CD4-positive, alpha-beta memory T cell (primary cell): ENCODE measurements at regions of chr4 and their contacts with region 1.

Region 1: DNA sequence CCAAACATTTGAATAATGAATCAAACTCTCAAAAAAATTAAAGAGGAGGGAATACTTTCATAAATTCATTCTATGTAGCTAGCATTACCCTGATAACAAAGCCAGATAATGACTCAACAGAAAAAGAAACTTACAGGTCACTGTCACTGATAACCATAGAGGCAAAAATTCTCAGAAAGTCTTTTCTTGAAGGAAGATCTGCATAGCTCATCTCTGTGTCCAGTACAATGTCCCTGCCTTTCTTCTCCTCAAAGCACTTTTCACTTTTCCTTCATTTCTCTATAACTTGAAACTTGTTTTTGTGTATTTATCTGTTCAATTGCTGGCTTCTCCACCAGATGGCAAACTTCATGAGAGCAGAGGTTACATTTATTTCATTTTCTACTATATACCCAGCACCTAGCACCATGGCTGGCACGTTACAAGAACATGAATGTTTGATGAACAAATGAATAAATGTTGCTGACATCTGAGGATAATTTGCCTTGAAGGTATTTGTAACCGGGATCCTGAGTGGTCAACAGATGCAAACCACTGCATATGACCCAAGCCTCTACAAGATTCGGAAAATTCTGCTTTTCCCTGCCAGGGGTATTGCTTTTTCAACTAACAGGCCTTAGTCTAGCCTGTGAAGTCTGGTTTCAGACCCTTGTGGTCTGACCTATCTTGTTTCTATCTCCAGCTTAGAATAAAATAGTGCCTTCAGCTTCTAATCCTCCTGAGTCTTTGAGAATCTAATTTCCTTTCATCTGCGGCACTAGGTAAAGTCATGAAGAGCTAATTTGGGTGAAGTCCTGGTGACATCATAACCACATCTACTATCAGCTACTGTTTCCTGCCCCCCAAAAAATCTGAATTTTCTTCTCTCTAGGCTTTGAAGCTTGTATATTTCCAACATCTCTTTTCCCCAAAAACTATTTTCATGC is 52.5 kb upstream of the ANTXR2 start:
- DNase-seq: peak; percentile 60 to 71 (median 68)
- H3K4me3 ChIP-seq: no peak overlapping the region
- H3K4me3 Mint-ChIP-seq: peak overlapping the region in 7 of 8 donors; percentile 41 to 72 (median 50)
- H3K27ac ChIP-seq: peak overlapping the region; percentile 77
- H3K27ac Mint-ChIP-seq: peak overlapping the region; percentile 86 to 97 (median 91)
- H3K4me1 ChIP-seq: peaks cover 56% of the 10 kb centered on the region
- H3K4me1 Mint-ChIP-seq: peaks cover 43 to 63% (median 51%) of the 10 kb centered on the region in 4 donors
- H3K27me3 ChIP-seq: no peaks in the 10 kb centered on the region
- H3K27me3 Mint-ChIP-seq: no peaks in the 10 kb centered on the region

Region 2: GRCh38 chr4:78938868-78939666 is 1186.4 kb before region 1 on chr4 and contains the start of gene PAQR3:
- CTCF ChIA-PET with region 1: no interaction called
- POLR2A ChIA-PET with region 1: no interaction called
- intact Hi-C with region 1: loop called (anchors 10 kb)
- DNase-seq: peak; percentile 75 to 86 (median 84)
- H3K4me3 ChIP-seq: peak within 1 kb of the TSS; percentile 74 to 75
- H3K4me3 Mint-ChIP-seq: peak within 1 kb of the TSS; percentile 95 to 100 (median 98)
- H3K27ac ChIP-seq: peak within 1 kb of the TSS; percentile 75
- H3K27ac Mint-ChIP-seq: peak within 1 kb of the TSS; percentile 90 to 99 (median 97)
- H3K4me1 ChIP-seq: peaks cover 36% of the 10 kb centered on the region
- H3K4me1 Mint-ChIP-seq: peaks cover 25 to 46% (median 35%) of the 10 kb centered on the region in 4 donors
- H3K27me3 ChIP-seq: no peaks in the 10 kb centered on the region
- H3K27me3 Mint-ChIP-seq: peaks cover 10 to 13% of the 10 kb centered on the region in 2 donors
- total RNA-seq, gene PAQR3: 10.2 to 12.1 TPM

Region 3: GRCh38 chr4:80058740-80059139 is 66.8 kb before region 1 on chr4:
- CTCF ChIA-PET with region 1: interaction called, 7 read pairs
- POLR2A ChIA-PET with region 1: interaction called, 3 read pairs
- intact Hi-C with region 1: loop called (anchors 5 kb)
- DNase-seq: peak; percentile 75 to 90 (median 86)
- H3K4me3 ChIP-seq: peak overlapping the region in 1 of 2 donors; percentile 13
- H3K4me3 Mint-ChIP-seq: peak overlapping the region; percentile 74 to 95 (median 84)
- H3K27ac ChIP-seq: peak overlapping the region; percentile 85
- H3K27ac Mint-ChIP-seq: peak overlapping the region; percentile 97 to 100 (median 99)
- H3K4me1 ChIP-seq: peaks cover 65% of the 10 kb centered on the region
- H3K4me1 Mint-ChIP-seq: peaks cover 37 to 79% (median 54%) of the 10 kb centered on the region in 4 donors
- H3K27me3 ChIP-seq: no peaks in the 10 kb centered on the region
- H3K27me3 Mint-ChIP-seq: no peaks in the 10 kb centered on the region

Region 4: GRCh38 chr4:80138551-80139538 is 13.3 kb after region 1 on chr4:
- CTCF ChIA-PET with region 1: interaction called, 73 read pairs
- POLR2A ChIA-PET with region 1: interaction called, 26 read pairs
- intact Hi-C with region 1: loop called (anchors 1 kb)
- DNase-seq: peak; percentile 55 to 81 (median 66)
- H3K4me3 ChIP-seq: no peak overlapping the region
- H3K4me3 Mint-ChIP-seq: peak overlapping the region in 7 of 8 donors; percentile 9 to 68 (median 59)
- H3K27ac ChIP-seq: peak overlapping the region; percentile 45
- H3K27ac Mint-ChIP-seq: peak overlapping the region; percentile 84 to 94 (median 93)
- H3K4me1 ChIP-seq: peaks cover 58% of the 10 kb centered on the region
- H3K4me1 Mint-ChIP-seq: peaks cover 33 to 67% (median 43%) of the 10 kb centered on the region in 4 donors
- H3K27me3 ChIP-seq: no peaks in the 10 kb centered on the region
- H3K27me3 Mint-ChIP-seq: no peaks in the 10 kb centered on the region

Region 5: DNA sequence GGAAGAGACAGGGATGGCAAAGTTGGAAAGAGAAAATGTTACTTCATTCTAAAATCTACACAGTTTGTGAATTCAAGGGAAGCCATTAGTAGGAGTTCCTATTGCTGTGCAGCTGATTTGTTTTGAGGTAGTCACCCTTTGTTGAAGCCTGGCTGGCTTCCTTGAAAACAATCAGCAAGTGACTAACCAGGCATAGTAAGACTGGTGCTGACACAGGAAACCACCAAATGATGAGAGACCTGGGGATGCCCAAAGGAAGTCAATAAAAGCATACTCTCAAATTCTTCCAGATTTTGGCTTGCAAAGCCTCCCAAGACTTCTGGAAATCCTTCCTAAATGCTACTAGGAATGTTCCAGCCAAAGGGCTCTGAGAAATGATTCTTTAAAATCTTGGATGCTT is 47.9 kb after region 1 on chr4:
- CTCF ChIA-PET with region 1: interaction called, 291 read pairs
- POLR2A ChIA-PET with region 1: interaction called, 91 read pairs
- intact Hi-C with region 1: loop called (anchors 1 kb)
- DNase-seq: peak; percentile 63 to 85 (median 72)
- H3K4me3 ChIP-seq: no peak overlapping the region
- H3K4me3 Mint-ChIP-seq: peak overlapping the region; percentile 43 to 82 (median 76)
- H3K27ac ChIP-seq: peak overlapping the region; percentile 71
- H3K27ac Mint-ChIP-seq: peak overlapping the region; percentile 93 to 96 (median 95)
- H3K4me1 ChIP-seq: peaks cover 67% of the 10 kb centered on the region
- H3K4me1 Mint-ChIP-seq: peaks cover 55 to 78% (median 67%) of the 10 kb centered on the region in 4 donors
- H3K27me3 ChIP-seq: no peaks in the 10 kb centered on the region
- H3K27me3 Mint-ChIP-seq: no peaks in the 10 kb centered on the region

Region 6: GRCh38 chr4:80196922-80197573 is 71.5 kb after region 1 on chr4 and contains the start of gene PRDM8:
- CTCF ChIA-PET with region 1: interaction called, 55 read pairs
- POLR2A ChIA-PET with region 1: interaction called, 49 read pairs
- intact Hi-C with region 1: no loop called
- DNase-seq: peak in 3 of 5 donors; percentile 40 to 61 (median 43)
- H3K4me3 ChIP-seq: peak within 1 kb of the TSS; percentile 7 to 25
- H3K4me3 Mint-ChIP-seq: peak within 1 kb of the TSS; percentile 63 to 86 (median 80)
- H3K27ac ChIP-seq: no peak within 1 kb of the TSS
- H3K27ac Mint-ChIP-seq: peak within 1 kb of the TSS; percentile 2 to 88 (median 68)
- H3K4me1 ChIP-seq: peaks cover 28% of the 10 kb centered on the region
- H3K4me1 Mint-ChIP-seq: peaks cover 23 to 53% (median 38%) of the 10 kb centered on the region in 4 donors
- H3K27me3 ChIP-seq: no peaks in the 10 kb centered on the region
- H3K27me3 Mint-ChIP-seq: no peaks in the 10 kb centered on the region
- total RNA-seq, gene PRDM8: 19.8 to 23.0 TPM

Region 7: DNA sequence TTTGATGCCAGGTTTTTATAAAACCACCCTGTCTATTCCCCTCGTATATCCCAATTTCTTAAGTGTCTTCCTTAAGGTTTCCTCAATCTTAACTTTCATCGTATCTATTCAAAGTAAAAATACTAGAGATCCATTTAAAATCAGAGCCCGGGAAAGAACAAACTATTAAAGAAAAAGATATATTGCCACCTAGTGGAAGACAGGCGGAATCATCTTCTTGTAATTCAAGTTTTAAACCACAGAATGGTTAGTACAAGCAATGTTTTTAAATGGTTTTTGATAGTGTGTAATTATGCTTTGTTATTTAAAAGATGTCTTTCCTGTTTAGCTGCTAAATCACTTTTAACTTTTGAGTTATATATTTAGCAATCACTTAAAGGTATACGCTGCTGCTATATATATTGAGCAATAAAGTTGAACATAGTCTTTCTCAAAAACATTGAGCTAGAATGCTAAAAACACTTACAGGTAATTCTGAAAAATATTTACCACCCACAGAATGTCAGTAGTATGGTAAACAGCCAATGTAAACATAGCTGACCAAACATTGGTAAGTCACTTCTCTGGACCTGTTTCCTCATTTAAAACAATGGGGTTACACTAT is 90.0 kb after region 1 on chr4:
- CTCF ChIA-PET with region 1: interaction called, 32 read pairs
- POLR2A ChIA-PET with region 1: interaction called, 4 read pairs
- intact Hi-C with region 1: loop called (anchors 1 kb)
- DNase-seq: peak in 4 of 5 donors; percentile 48 to 55 (median 51)
- H3K4me3 ChIP-seq: no peak overlapping the region
- H3K4me3 Mint-ChIP-seq: peak overlapping the region in 1 of 8 donors; percentile 4
- H3K27ac ChIP-seq: no peak overlapping the region
- H3K27ac Mint-ChIP-seq: no peak overlapping the region
- H3K4me1 ChIP-seq: no peaks in the 10 kb centered on the region
- H3K4me1 Mint-ChIP-seq: peaks cover 0 to 1% (median 0%) of the 10 kb centered on the region in 4 donors
- H3K27me3 ChIP-seq: peaks cover 9% of the 10 kb centered on the region
- H3K27me3 Mint-ChIP-seq: peaks cover 8% of the 10 kb centered on the region in 2 donors